BJ (cell line): ENCODE measurements at regions of chr10 and their contacts with region 1.

Region 1: GRCh38 chr10:100004805-100005510 is 4.8 kb downstream of the DNMBP start:
- DNase-seq: no peak
- H3K4me3 ChIP-seq: peak overlapping the region; percentile 22
- H3K27me3 ChIP-seq: no peaks in the 10 kb centered on the region
- CTCF ChIP-seq: no peak

Region 2: DNA sequence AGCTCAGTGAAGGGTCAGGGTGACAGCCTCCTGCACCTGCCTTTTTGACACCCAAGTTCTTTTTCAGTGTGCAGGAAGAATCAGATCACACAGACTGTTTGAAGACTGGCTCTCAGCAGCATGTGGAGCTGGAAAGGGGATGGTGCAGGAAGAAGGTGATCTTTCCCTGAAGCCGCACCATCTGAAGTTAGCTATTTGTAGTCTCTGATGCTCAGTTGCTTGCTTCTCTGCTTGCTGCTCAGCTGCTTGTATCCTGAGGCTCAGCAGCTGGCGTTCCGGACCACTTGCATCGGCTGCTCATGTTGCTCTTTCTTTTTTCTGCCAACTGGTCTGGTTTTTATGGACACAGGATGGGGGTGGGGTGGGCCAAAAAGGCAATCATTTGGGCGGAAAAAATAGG is 20.6 kb after region 1 on chr10:
- CTCF ChIA-PET with region 1: interaction called, 25 read pairs
- POLR2A ChIA-PET with region 1: interaction called, 11 read pairs
- DNase-seq: peak; percentile 17
- H3K4me3 ChIP-seq: no peak overlapping the region
- H3K27me3 ChIP-seq: no peaks in the 10 kb centered on the region
- CTCF ChIP-seq: no peak

Region 3: DNA sequence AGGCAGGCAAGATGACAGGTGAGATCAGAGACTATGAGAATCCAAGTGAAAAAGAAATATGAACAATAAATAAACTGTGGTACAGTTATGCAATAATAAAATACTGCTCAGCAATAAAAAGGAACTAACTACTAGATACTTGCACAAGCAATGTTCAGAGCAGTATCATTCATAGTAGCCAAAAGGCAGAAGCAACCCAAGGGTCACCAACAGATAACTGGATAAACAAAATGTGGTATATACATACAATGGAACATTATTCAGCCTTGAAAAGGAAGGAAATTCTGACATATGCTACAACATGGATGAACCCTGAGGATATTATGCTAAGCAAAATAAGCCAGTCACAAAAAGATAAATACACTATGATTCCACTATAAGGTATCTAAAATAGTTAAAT is 1915.6 kb after region 1 on chr10:
- CTCF ChIA-PET with region 1: no interaction called
- POLR2A ChIA-PET with region 1: no interaction called
- DNase-seq: no peak
- H3K4me3 ChIP-seq: no peak overlapping the region
- H3K27me3 ChIP-seq: no peaks in the 10 kb centered on the region
- CTCF ChIP-seq: no peak